Activated CD4-positive, alpha-beta memory T cell treated with anti-CD3 and anti-CD28 coated beads for 36 hours (primary cell): ENCODE measurements at regions of chr5 and their contacts with region 1.

Region 1: GRCh38 chr5:75336625-75337339 is at the start of gene HMGCR:
- DNase-seq: peak; percentile 99
- H3K4me3 Mint-ChIP-seq: no peak within 1 kb of the TSS
- H3K27ac Mint-ChIP-seq: no peak within 1 kb of the TSS
- H3K4me1 Mint-ChIP-seq: peaks cover 35% of the 10 kb centered on the region
- H3K27me3 Mint-ChIP-seq: no peaks in the 10 kb centered on the region
- total RNA-seq, gene HMGCR: 57.7 to 68.6 TPM

Region 2: GRCh38 chr5:74934949-74935751 is 401.6 kb before region 1 on chr5:
- CTCF ChIA-PET with region 1: no interaction called
- POLR2A ChIA-PET with region 1: interaction called, 4 read pairs
- intact Hi-C with region 1: loop called (anchors 5 kb)
- DNase-seq: peak; percentile 44
- H3K4me3 Mint-ChIP-seq: peak overlapping the region; percentile 42
- H3K27ac Mint-ChIP-seq: peak overlapping the region; percentile 71
- H3K4me1 Mint-ChIP-seq: peaks cover 26% of the 10 kb centered on the region
- H3K27me3 Mint-ChIP-seq: peaks cover 7% of the 10 kb centered on the region

Region 3: GRCh38 chr5:75320341-75320740 is 16.4 kb before region 1 on chr5:
- CTCF ChIA-PET with region 1: interaction called, 4 read pairs
- POLR2A ChIA-PET with region 1: interaction called, 4 read pairs
- intact Hi-C with region 1: loop called (anchors 1 kb)
- DNase-seq: no peak
- H3K4me3 Mint-ChIP-seq: no peak overlapping the region
- H3K27ac Mint-ChIP-seq: no peak overlapping the region
- H3K4me1 Mint-ChIP-seq: peaks cover 21% of the 10 kb centered on the region
- H3K27me3 Mint-ChIP-seq: no peaks in the 10 kb centered on the region

Region 4: DNA sequence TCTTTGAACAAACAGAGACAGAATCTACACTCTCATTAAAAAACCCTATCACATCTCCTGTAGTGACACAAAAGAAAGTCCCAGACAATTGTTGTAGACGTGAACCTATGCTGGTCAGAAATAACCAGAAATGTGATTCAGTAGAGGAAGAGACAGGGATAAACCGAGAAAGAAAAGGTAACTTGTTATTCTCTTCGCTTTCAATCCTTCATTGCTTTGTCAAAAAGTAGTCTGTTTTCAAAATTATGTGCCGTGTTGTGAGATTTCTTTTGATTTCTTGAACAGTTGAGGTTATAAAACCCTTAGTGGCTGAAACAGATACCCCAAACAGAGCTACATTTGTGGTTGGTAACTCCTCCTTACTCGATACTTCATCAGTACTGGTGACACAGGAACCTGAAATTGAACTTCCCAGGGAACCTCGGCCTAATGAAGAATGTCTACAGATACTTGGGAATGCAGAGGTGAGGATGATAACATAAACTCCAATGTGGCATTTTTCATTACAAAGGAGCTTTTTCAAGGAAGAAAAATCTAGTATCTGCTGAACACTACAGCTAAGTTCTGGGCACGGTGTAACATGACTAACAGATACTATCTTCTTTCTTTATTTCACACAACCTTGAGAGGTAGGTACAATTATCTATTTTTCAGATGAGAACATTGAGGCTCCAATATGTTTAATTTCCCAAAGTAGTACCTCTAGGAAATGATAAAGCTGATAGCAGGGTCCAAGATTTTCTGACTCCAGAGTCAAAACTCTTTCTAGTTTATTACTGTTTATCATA is 14.6 kb after region 1 on chr5:
- CTCF ChIA-PET with region 1: interaction called, 16 read pairs
- POLR2A ChIA-PET with region 1: interaction called, 16 read pairs
- intact Hi-C with region 1: loop called (anchors 1 kb)
- DNase-seq: no peak
- H3K4me3 Mint-ChIP-seq: no peak overlapping the region
- H3K27ac Mint-ChIP-seq: peak overlapping the region; percentile 74
- H3K4me1 Mint-ChIP-seq: peaks cover 27% of the 10 kb centered on the region
- H3K27me3 Mint-ChIP-seq: no peaks in the 10 kb centered on the region

Region 5: DNA sequence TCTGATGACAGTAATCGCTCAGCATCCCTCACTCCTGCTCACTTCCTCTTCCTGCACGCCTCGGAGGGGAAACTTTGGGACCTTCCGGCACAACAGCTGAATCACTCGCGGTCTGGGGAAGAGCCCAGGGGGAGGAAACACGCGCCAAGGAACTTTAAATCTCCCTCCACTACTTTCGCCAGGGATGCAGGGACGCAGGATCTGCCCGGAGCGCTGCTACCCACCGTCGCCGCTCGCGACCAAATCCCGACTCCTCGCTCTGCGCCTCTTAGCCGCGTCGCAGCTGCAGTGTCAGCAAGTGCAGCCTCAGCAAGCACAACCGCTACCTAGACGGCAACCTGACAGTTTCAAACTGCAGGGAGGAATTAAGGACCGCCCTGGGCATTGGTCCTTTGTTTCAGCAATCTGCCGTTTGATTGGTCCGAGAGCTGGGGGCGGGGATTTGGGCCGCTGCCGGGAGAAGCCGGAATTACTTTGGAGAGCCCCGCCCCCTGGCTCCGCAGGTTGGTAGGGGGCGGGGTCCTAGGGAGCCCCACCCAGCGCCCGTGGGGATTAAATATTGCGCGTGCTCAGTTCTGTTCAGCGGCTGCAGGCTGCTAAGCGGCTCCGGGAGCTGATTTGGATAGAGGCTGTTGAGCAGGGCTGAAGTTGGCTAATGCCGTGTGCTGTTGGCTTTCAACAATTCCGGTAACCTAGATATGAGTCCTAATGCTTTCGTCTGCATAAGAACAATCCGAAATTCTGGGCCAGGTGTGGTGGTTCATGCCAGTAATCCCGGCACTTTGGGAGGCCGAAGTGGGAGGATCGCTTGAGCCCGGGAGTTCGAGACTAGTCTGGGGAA is 380.5 kb after region 1 on chr5 and contains the start of gene POC5:
- CTCF ChIA-PET with region 1: interaction called, 3 read pairs
- POLR2A ChIA-PET with region 1: interaction called, 5 read pairs
- intact Hi-C with region 1: loop called (anchors 1 kb)
- DNase-seq: peak; percentile 99
- H3K4me3 Mint-ChIP-seq: peak within 1 kb of the TSS; percentile 98
- H3K27ac Mint-ChIP-seq: peak within 1 kb of the TSS; percentile 99
- H3K4me1 Mint-ChIP-seq: peaks cover 28% of the 10 kb centered on the region
- H3K27me3 Mint-ChIP-seq: no peaks in the 10 kb centered on the region
- total RNA-seq, gene POC5: 20.7 to 21.8 TPM